CD8-positive, alpha-beta T cell (primary cell): ENCODE measurements at regions of chr7 and their contacts with region 1.

Region 1: GRCh38 chr7:20624666-20625385 is 9.4 kb downstream of the ABCB5 start:
- DNase-seq: no peak
- ATAC-seq: no peak
- H3K4me3 ChIP-seq: no peak overlapping the region
- H3K4me3 Mint-ChIP-seq: no peak overlapping the region
- H3K27ac ChIP-seq: no peak overlapping the region
- H3K27ac Mint-ChIP-seq: no peak overlapping the region
- H3K4me1 ChIP-seq: no peaks in the 10 kb centered on the region
- H3K4me1 Mint-ChIP-seq: no peaks in the 10 kb centered on the region
- H3K27me3 ChIP-seq: no peaks in the 10 kb centered on the region
- H3K27me3 Mint-ChIP-seq: peaks cover 2% of the 10 kb centered on the region
- CTCF ChIP-seq: no peak

Region 2: GRCh38 chr7:20560325-20561180 is 64.3 kb before region 1 on chr7:
- CTCF ChIA-PET with region 1: no interaction called
- POLR2A ChIA-PET with region 1: no interaction called
- intact Hi-C with region 1: loop called in 1 of 2 experiments (anchors 10 kb)
- DNase-seq: no peak
- ATAC-seq: no peak
- H3K4me3 ChIP-seq: no peak overlapping the region
- H3K4me3 Mint-ChIP-seq: no peak overlapping the region
- H3K27ac ChIP-seq: no peak overlapping the region
- H3K27ac Mint-ChIP-seq: no peak overlapping the region
- H3K4me1 ChIP-seq: no peaks in the 10 kb centered on the region
- H3K4me1 Mint-ChIP-seq: no peaks in the 10 kb centered on the region
- H3K27me3 ChIP-seq: no peaks in the 10 kb centered on the region
- H3K27me3 Mint-ChIP-seq: no peaks in the 10 kb centered on the region
- CTCF ChIP-seq: no peak

Region 3: DNA sequence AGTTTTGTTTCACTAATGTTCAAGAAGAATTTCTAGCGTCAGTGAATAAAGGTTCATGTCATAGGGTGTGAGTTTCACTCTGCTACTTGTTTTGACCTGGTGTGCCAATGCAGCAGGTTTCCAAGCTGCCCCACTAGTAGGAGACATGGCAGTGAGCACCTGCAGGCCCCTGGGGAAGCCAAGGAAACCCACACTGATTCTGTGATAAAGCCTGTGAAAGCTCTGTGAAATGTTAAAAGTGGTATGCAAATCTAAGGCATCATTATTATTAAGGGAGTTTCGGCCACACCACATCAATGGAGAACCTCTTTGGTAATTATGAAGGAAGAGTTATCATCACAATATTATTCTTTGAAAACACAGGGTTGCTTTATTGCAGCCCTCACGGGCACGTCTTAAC is 37.1 kb after region 1 on chr7:
- CTCF ChIA-PET with region 1: no interaction called
- POLR2A ChIA-PET with region 1: no interaction called
- intact Hi-C with region 1: no loop called
- DNase-seq: no peak
- ATAC-seq: no peak
- H3K4me3 ChIP-seq: no peak overlapping the region
- H3K4me3 Mint-ChIP-seq: no peak overlapping the region
- H3K27ac ChIP-seq: no peak overlapping the region
- H3K27ac Mint-ChIP-seq: no peak overlapping the region
- H3K4me1 ChIP-seq: no peaks in the 10 kb centered on the region
- H3K4me1 Mint-ChIP-seq: no peaks in the 10 kb centered on the region
- H3K27me3 ChIP-seq: no peaks in the 10 kb centered on the region
- H3K27me3 Mint-ChIP-seq: no peaks in the 10 kb centered on the region
- CTCF ChIP-seq: no peak

Region 4: DNA sequence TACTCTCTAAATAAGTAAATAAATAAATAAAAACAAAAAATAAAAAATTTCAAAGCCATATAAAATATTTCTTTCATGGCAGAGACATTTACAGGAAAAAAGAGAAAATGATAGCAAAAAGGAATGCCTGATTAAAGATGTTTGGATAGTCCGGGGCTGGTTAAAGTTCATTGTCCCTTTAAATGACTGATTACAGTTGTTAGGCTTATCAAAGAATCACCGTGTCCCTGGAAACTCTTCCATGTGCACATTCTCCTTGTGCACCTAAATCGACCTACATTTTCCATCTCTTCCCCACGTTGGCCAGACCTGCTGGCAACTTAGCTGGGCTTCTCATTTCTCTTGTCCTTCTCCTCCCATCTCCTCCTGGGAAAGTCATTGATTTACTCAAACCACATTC is 59.8 kb after region 1 on chr7:
- CTCF ChIA-PET with region 1: no interaction called
- POLR2A ChIA-PET with region 1: no interaction called
- intact Hi-C with region 1: loop called in 1 of 2 experiments (anchors 10 kb)
- DNase-seq: no peak
- ATAC-seq: no peak
- H3K4me3 ChIP-seq: no peak overlapping the region
- H3K4me3 Mint-ChIP-seq: no peak overlapping the region
- H3K27ac ChIP-seq: no peak overlapping the region
- H3K27ac Mint-ChIP-seq: no peak overlapping the region
- H3K4me1 ChIP-seq: no peaks in the 10 kb centered on the region
- H3K4me1 Mint-ChIP-seq: no peaks in the 10 kb centered on the region
- H3K27me3 ChIP-seq: no peaks in the 10 kb centered on the region
- H3K27me3 Mint-ChIP-seq: no peaks in the 10 kb centered on the region
- CTCF ChIP-seq: no peak